GM12878 (cell line): ENCODE measurements at regions of chr10 and their contacts with region 1.

Region 1: GRCh38 chr10:12348870-12349628 is at the start of gene CAMK1D:
- DNase-seq: no peak
- ATAC-seq: peak; percentile 57
- H3K4me3 ChIP-seq: peak within 1 kb of the TSS; percentile 92
- H3K27ac ChIP-seq: peak within 1 kb of the TSS; percentile 67
- H3K4me1 ChIP-seq: peaks cover 27% of the 10 kb centered on the region
- H3K27me3 ChIP-seq: no peaks in the 10 kb centered on the region
- CTCF ChIP-seq: peak; percentile 9 to 19 (median 15); a peak in 1 of 6 replicates
- EP300 ChIP-seq: no peak
- POLR2A ChIP-seq: peak; percentile 85
- RAD21 ChIP-seq: peak; percentile 11; the same call in 1 of the 2 replicates
- polyA plus RNA-seq, gene CAMK1D: 2.1 to 5.5 TPM

Region 2: DNA sequence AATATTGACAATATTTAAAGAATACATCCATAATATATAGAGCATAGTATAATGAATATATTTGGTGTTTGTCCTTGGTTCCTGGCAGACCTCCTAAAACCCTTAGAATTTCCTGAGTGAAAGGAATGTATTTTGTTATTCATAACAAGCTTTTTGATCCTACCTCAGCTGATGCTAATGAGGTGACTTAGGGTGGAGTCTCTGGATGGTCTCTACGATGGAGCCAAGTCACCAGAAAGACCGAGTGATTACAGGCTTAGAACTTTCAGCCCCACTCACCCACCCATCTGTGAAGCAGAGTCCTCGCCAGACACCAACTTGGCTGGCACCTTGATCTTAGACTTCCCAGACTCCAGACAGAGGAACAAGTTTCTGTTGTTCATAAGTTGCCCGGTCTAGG is 342.4 kb before region 1 on chr10:
- CTCF ChIA-PET with region 1: no interaction called
- POLR2A ChIA-PET with region 1: no interaction called
- RAD21 ChIA-PET with region 1: no interaction called
- SMC1A ChIA-PET with region 1: no interaction called
- in situ Hi-C with region 1: no loop called
- intact Hi-C with region 1: no loop called
- DNase-seq: no peak
- ATAC-seq: no peak
- H3K4me3 ChIP-seq: no peak overlapping the region
- H3K27ac ChIP-seq: no peak overlapping the region
- H3K4me1 ChIP-seq: no peaks in the 10 kb centered on the region
- H3K27me3 ChIP-seq: no peaks in the 10 kb centered on the region
- CTCF ChIP-seq: no peak
- EP300 ChIP-seq: no peak
- POLR2A ChIP-seq: no peak
- RAD21 ChIP-seq: no peak

Region 3: GRCh38 chr10:12455774-12456173 is 106.7 kb after region 1 on chr10:
- CTCF ChIA-PET with region 1: no interaction called
- POLR2A ChIA-PET with region 1: no interaction called
- RAD21 ChIA-PET with region 1: no interaction called
- SMC1A ChIA-PET with region 1: no interaction called
- in situ Hi-C with region 1: no loop called
- intact Hi-C with region 1: no loop called
- DNase-seq: no peak
- ATAC-seq: no peak
- H3K4me3 ChIP-seq: no peak overlapping the region
- H3K27ac ChIP-seq: no peak overlapping the region
- H3K4me1 ChIP-seq: no peaks in the 10 kb centered on the region
- H3K27me3 ChIP-seq: no peaks in the 10 kb centered on the region
- CTCF ChIP-seq: no peak
- EP300 ChIP-seq: no peak
- POLR2A ChIP-seq: no peak
- RAD21 ChIP-seq: no peak

Region 4: GRCh38 chr10:12484941-12485805 is 136.1 kb after region 1 on chr10:
- CTCF ChIA-PET with region 1: interaction called, 3 read pairs
- POLR2A ChIA-PET with region 1: interaction called, 5 read pairs
- RAD21 ChIA-PET with region 1: interaction called, 7 read pairs
- SMC1A ChIA-PET with region 1: interaction called, 8 read pairs
- in situ Hi-C with region 1: no loop called
- intact Hi-C with region 1: loop called (anchors 10 kb)
- DNase-seq: peak; percentile 76
- ATAC-seq: peak; percentile 85
- H3K4me3 ChIP-seq: no peak overlapping the region
- H3K27ac ChIP-seq: peak overlapping the region; percentile 76
- H3K4me1 ChIP-seq: peaks cover 20% of the 10 kb centered on the region
- H3K27me3 ChIP-seq: no peaks in the 10 kb centered on the region
- CTCF ChIP-seq: peak in 2 of 3 experiments; percentile 37 to 56; a peak in 3 of 6 replicates
- EP300 ChIP-seq: no peak
- POLR2A ChIP-seq: peak; percentile 37
- RAD21 ChIP-seq: peak; percentile 31; the same call in 1 of the 2 replicates

Region 5: GRCh38 chr10:12639996-12640944 is 291.2 kb after region 1 on chr10:
- CTCF ChIA-PET with region 1: no interaction called
- POLR2A ChIA-PET with region 1: no interaction called
- RAD21 ChIA-PET with region 1: no interaction called
- SMC1A ChIA-PET with region 1: no interaction called
- in situ Hi-C with region 1: no loop called
- intact Hi-C with region 1: no loop called
- DNase-seq: no peak
- ATAC-seq: no peak
- H3K4me3 ChIP-seq: no peak overlapping the region
- H3K27ac ChIP-seq: no peak overlapping the region
- H3K4me1 ChIP-seq: no peaks in the 10 kb centered on the region; the same call in 1 of the 2 replicates
- H3K27me3 ChIP-seq: no peaks in the 10 kb centered on the region
- CTCF ChIP-seq: no peak
- EP300 ChIP-seq: no peak
- POLR2A ChIP-seq: no peak
- RAD21 ChIP-seq: no peak